Adrenal gland (tissue), 19 donors: ENCODE measurements at regions of chr6 and their contacts with region 1.

Region 1: DNA sequence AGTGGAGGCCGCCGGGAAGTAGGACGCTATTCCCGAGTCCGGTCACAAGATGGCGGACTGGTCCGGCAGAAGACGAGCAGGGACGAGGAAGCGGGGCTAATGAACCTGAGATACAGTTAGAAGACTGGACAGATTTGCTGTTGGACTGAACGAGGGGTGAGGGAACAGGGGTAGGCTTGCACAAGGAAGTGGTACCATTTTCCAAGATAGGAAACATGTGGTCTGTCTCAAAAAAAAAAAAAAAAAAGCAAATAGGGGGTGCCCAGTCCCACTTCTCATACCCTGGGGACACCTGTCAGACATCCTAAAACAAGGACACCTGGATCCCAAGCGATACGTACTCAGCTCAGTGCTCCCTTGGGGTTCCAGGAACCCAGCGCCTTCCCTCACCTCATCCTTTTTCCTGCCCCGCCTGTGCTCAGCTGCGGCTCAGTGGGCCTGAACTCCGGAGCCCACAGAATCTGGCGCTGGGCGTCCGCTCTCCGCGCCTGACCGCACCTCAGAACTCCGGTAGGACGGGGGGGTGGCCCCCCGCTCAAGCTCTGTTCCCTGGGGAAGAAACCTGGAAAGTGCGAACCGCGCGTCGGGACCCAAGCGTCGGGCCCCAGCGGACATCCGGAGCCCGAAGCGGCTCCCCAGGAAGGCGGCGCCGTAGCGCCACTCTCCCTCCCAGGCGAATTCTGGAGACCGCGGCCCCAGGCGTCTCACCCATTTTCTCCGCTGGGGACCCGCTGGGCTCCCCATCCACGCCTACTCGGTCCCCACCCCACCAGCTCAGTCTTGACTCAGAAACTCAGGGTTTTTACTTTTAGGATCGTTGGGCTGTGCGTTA is at the start of gene LY6G5C:
- DNase-seq: peak; percentile 82 to 95 (median 88)
- H3K4me3 ChIP-seq: peak within 1 kb of the TSS in 3 of 4 donors; percentile 20 to 55 (median 27)
- H3K27ac ChIP-seq: peak within 1 kb of the TSS in 3 of 5 donors; percentile 47 to 62 (median 59)
- H3K4me1 ChIP-seq: peaks cover 9 to 10% of the 10 kb centered on the region in 2 donors
- H3K27me3 ChIP-seq: no peaks in the 10 kb centered on the region
- CTCF ChIP-seq: peak; percentile 23 to 85 (median 73)
- POLR2A ChIP-seq: peak in 1 of 2 donors; percentile 17
- total RNA-seq, gene LY6G5C: 0.39 to 2.5 (median 1.8) TPM in 8 of 9 donors, not detected in the other

Region 2: GRCh38 chr6:31622684-31623091 is 58.4 kb before region 1 on chr6:
- intact Hi-C with region 1: no loop called
- DNase-seq: no peak
- H3K4me3 ChIP-seq: no peak overlapping the region
- H3K27ac ChIP-seq: no peak overlapping the region
- H3K4me1 ChIP-seq: peaks cover 14 to 17% of the 10 kb centered on the region in 2 donors
- H3K27me3 ChIP-seq: no peaks in the 10 kb centered on the region
- CTCF ChIP-seq: no peak
- POLR2A ChIP-seq: no peak

Region 3: DNA sequence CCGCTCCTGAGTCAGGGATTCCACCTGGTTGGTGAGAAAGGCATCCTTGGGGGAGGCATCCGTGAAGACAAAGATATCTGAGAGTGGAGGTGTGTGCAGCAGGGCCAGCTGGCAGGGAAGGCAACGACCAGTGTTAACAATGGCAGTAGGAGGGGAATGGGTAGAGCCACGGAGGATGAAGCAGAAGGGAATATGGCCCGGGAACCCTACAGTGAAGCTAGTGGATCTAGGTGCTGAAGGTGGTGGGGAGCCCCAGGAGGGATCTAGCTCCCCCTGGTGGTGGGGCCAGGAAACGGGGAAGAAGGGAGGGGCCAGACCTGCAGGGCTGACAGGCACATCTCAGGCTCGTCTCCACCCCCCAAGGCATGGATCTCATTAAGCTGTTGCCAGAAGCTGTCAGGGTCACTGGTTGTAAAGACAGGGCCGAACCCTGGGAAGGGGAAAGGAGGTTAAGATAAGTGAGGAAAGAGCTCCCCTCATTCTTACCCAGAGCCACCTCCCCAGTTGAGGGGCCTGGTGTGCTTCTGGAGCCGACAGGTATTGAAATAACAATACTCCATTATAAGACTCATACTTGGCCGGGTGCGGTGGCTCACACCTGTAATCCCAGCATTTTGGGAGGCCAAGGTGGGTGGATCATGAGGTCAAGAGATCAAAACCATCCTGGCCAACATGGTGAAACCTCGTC is 88.8 kb after region 1 on chr6:
- intact Hi-C with region 1: loop called in 1 of 2 experiments (anchors 5 kb)
- DNase-seq: peak; percentile 67 to 90 (median 75)
- H3K4me3 ChIP-seq: no peak overlapping the region
- H3K27ac ChIP-seq: no peak overlapping the region
- H3K4me1 ChIP-seq: no peaks in the 10 kb centered on the region
- H3K27me3 ChIP-seq: no peaks in the 10 kb centered on the region
- CTCF ChIP-seq: peak; percentile 57 to 75 (median 72)
- POLR2A ChIP-seq: no peak

Region 4: DNA sequence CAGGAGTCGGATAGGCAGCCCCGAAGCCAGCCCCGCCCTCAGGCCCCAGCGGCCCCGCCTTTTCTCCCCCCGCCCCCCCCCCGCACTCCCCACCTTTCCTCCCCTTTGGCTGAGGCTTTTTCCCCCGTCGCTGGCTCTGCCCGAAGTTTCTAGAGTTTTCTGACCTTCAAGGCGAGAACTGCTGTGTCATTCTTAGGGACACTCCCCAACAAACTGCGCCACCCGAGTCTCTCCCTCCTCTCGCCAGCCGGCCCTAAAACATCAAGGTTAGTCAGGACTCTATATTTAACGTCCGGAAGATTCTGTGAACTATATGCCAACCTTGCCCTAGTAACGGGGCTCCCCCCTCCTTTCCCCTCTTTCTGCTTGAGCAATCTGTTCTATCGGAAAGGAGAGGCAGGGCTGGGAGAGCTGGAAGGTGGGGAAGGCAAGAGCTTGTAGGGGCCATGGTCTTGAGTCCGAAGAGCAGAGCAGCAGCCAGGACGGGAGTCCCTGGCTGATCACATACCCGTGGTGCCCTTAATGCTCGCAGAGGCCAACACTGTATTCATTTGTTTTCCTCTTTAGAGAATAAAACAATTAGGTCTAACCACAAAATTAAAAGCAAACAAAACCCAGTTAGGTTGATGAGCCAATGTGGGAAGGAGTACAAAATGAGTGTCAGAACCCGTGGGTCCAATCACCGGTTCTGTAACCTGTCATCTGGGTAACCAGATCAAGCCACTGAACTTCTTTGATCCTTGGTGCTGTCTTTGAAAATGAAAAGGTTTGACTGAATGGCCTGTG is 141.2 kb after region 1 on chr6:
- intact Hi-C with region 1: no loop called
- DNase-seq: peak; percentile 91 to 97 (median 94)
- H3K4me3 ChIP-seq: peak overlapping the region in 2 of 4 donors; percentile 50 to 55
- H3K27ac ChIP-seq: peak overlapping the region; percentile 89 to 100 (median 97)
- H3K4me1 ChIP-seq: peaks cover 29 to 66% of the 10 kb centered on the region in 2 donors
- H3K27me3 ChIP-seq: no peaks in the 10 kb centered on the region
- CTCF ChIP-seq: no peak
- POLR2A ChIP-seq: peak; percentile 30 to 82

Region 5: GRCh38 chr6:31834434-31835198 is 153.6 kb after region 1 on chr6:
- intact Hi-C with region 1: loop called (anchors 5 to 10 kb)
- DNase-seq: peak; percentile 88 to 92 (median 90)
- H3K4me3 ChIP-seq: peak overlapping the region; percentile 62 to 93 (median 84)
- H3K27ac ChIP-seq: peak overlapping the region; percentile 85 to 97 (median 95)
- H3K4me1 ChIP-seq: peaks cover 25 to 49% of the 10 kb centered on the region in 2 donors
- H3K27me3 ChIP-seq: no peaks in the 10 kb centered on the region
- CTCF ChIP-seq: no peak
- POLR2A ChIP-seq: peak; percentile 19 to 75